Activated T-helper 2 cell treated with anti-CD3 and anti-CD28 coated beads, Interferon-gamma antibody, Interleukin-2, Interleukin-4, amounts not matched to agents 10 μg/mL and 5 μg/mL and 100 μg/mL, durations not matched to agents 14 hours and 24 hours and 36 hours (primary cell): ENCODE measurements at regions of chr10 and their contacts with region 1.

Region 1: DNA sequence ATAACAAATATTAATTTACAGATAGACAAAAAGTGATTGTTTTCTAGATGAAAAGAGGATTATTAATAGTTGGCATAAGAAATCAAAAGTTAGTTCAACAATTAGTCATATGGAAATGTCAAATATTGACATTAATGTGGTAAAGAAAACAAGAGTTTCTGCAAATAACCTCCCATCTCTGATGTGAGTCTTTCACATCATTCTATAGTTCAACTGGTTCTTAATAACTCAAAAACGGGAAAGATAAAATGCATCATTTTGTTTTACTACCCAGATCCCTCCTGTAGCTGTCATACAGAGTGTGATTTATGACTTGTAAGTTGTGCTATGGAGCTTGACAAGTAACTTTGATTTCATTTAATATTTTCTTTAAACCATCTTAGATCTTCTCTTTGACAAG is 594.8 kb downstream of the ZWINT start:
- DNase-seq: no peak
- H3K4me3 Mint-ChIP-seq: no peak overlapping the region
- H3K27ac Mint-ChIP-seq: no peak overlapping the region
- H3K4me1 Mint-ChIP-seq: no peaks in the 10 kb centered on the region
- H3K27me3 Mint-ChIP-seq: no peaks in the 10 kb centered on the region

Region 2: GRCh38 chr10:55793024-55793423 is 26.8 kb after region 1 on chr10:
- intact Hi-C with region 1: loop called (anchors 1 kb)
- DNase-seq: no peak
- H3K4me3 Mint-ChIP-seq: no peak overlapping the region
- H3K27ac Mint-ChIP-seq: no peak overlapping the region
- H3K4me1 Mint-ChIP-seq: no peaks in the 10 kb centered on the region
- H3K27me3 Mint-ChIP-seq: no peaks in the 10 kb centered on the region

Region 3: GRCh38 chr10:55881588-55881987 is 115.4 kb after region 1 on chr10:
- intact Hi-C with region 1: no loop called
- DNase-seq: no peak
- H3K4me3 Mint-ChIP-seq: no peak overlapping the region
- H3K27ac Mint-ChIP-seq: no peak overlapping the region
- H3K4me1 Mint-ChIP-seq: no peaks in the 10 kb centered on the region
- H3K27me3 Mint-ChIP-seq: no peaks in the 10 kb centered on the region

Region 4: DNA sequence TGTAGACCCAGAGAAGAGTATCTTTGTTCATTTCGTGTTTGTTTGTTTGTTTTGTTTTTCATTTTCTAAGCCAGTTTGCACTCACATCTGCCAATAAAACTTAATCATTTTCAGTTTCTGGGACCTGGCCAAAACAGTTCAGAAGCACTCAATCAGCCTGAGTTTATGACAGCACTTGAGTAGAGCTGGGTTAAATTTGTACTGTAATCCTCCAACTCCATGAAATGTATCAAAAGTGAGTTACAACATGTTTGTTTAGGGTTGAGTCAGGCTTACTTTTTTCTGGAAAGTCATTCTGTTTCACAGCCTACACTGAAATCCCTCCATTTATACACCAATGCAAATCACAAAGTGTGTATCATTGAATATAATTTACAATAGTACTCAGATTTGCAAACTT is 503.0 kb after region 1 on chr10:
- intact Hi-C with region 1: no loop called
- DNase-seq: no peak
- H3K4me3 Mint-ChIP-seq: no peak overlapping the region
- H3K27ac Mint-ChIP-seq: no peak overlapping the region
- H3K4me1 Mint-ChIP-seq: no peaks in the 10 kb centered on the region
- H3K27me3 Mint-ChIP-seq: no peaks in the 10 kb centered on the region